SK-N-SH (cell line): ENCODE measurements at regions of chr10 and their contacts with region 1.

Region 1: DNA sequence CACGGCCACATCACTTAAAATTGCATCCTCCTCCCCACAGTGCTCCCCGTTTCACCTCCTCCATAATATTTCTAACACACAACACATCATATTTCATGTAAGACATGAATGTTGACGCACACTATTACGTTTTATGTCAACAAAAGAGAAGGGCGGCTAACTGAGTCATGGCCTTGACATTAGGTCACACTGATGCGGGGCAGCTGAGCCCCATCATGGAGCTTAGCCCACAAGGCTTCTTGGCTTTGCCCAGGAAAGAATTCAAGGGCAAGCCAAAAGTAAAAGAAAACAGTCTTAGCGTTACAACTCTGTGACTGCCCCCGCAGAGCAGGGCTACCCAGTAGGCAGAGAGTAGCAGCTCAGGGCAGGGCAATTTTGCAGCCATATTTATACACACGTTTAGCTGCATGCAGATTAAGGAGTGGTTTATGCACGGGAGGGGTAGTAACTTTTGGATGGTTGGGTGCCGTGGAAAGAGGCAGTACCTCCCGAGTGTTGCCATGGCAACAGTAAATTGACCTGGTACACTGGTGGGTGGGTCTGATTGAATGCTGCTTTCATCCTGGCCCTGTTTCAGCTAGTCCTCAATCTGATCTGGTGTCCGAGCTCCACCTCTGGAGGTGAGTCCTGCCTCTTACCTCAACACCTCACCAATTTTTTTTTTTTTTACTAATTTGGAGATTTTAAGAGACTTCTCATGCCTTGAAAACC is 156.2 kb upstream of the FRMD4A start:
- DNase-seq: no peak
- H3K4me3 ChIP-seq: no peak overlapping the region
- H3K27ac ChIP-seq: no peak overlapping the region
- H3K4me1 ChIP-seq: no peaks in the 10 kb centered on the region
- H3K27me3 ChIP-seq: no peaks in the 10 kb centered on the region
- CTCF ChIP-seq: no peak
- EP300 ChIP-seq: no peak
- RAD21 ChIP-seq: no peak

Region 2: DNA sequence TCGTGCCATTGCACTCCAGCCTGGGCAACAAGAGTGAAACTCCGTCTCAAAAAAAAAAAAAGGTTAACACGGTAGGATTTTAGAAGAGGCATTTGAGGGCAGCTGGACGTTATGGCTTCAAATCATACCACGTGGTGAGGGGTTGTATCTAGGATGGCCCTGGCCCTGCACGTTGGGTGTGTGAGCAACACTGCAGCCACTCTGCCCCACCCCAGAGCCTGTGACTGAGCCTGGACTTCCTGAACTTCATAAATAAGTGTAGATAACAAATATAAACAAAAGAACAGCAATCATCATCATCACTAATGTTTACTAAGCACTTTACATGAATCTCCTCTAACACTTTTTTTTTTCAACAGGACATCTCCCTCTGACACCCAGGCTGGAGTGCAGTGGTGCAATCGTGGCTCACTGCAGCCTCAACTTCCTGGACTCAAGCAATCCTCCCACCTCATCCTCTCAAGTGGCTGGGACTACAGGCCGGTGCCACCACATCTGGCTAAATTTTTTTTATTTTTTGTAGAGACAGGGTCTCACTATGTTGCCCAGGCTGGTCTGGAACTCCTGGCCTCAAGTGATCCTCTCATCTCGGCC is 13.3 kb after region 1 on chr10:
- CTCF ChIA-PET with region 1: interaction called, 28 read pairs
- POLR2A ChIA-PET with region 1: no interaction called
- DNase-seq: no peak
- H3K4me3 ChIP-seq: no peak overlapping the region
- H3K27ac ChIP-seq: no peak overlapping the region
- H3K4me1 ChIP-seq: no peaks in the 10 kb centered on the region
- H3K27me3 ChIP-seq: no peaks in the 10 kb centered on the region
- CTCF ChIP-seq: no peak
- EP300 ChIP-seq: no peak
- RAD21 ChIP-seq: no peak

Region 3: GRCh38 chr10:14530465-14530864 is 43.5 kb after region 1 on chr10:
- CTCF ChIA-PET with region 1: no interaction called
- POLR2A ChIA-PET with region 1: no interaction called
- DNase-seq: no peak
- H3K4me3 ChIP-seq: no peak overlapping the region
- H3K27ac ChIP-seq: no peak overlapping the region
- H3K4me1 ChIP-seq: no peaks in the 10 kb centered on the region; a peak in 1 of 4 replicates
- H3K27me3 ChIP-seq: no peaks in the 10 kb centered on the region
- CTCF ChIP-seq: no peak
- EP300 ChIP-seq: no peak
- RAD21 ChIP-seq: no peak

Region 4: DNA sequence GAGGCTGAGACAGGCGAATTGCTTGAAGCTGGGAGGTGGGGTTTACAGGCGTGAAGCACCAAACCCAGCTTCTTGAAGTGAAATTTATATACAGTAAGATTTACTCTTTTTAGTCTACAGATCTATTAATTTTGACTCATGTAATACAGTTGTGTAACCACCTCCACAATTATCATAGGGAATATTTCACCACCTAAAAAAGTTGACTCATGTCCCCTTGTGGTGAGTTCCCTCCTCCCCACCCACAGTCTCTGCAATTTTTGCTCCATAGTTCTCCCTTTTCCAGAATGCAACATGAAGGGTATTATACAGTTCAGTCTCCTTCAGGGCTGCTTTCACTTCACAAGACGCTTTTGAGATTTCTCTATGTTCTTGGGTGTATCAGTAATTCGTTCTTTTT is 130.9 kb after region 1 on chr10:
- CTCF ChIA-PET with region 1: no interaction called
- POLR2A ChIA-PET with region 1: no interaction called
- DNase-seq: no peak
- H3K4me3 ChIP-seq: no peak overlapping the region
- H3K27ac ChIP-seq: no peak overlapping the region
- H3K4me1 ChIP-seq: peaks cover 0 to 4% of the 10 kb centered on the region in 2 experiments; a peak in 1 of 4 replicates
- H3K27me3 ChIP-seq: no peaks in the 10 kb centered on the region
- CTCF ChIP-seq: no peak
- EP300 ChIP-seq: no peak
- RAD21 ChIP-seq: no peak

Region 5: DNA sequence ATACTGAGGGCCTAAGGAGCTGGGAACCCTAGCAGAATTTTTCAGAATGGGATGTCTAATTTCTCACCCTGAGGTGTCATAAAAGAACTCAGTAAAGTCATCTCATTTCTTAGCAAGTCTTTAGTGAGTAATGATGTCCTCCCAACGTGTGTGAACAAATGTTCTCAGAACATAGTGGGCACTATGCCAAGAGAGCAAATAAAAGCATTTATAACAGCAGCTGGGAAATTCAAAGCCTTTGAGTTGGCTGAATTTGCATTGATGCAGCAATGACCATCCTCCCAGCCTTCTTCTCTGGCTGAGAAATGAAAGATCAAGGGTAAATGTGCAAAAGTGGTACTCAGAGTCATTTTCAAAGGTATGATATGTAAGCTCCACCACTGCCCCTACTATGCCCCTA is 178.4 kb after region 1 on chr10:
- CTCF ChIA-PET with region 1: no interaction called
- POLR2A ChIA-PET with region 1: no interaction called
- DNase-seq: no peak
- H3K4me3 ChIP-seq: no peak overlapping the region
- H3K27ac ChIP-seq: no peak overlapping the region
- H3K4me1 ChIP-seq: peaks cover 0 to 16% of the 10 kb centered on the region in 2 experiments; a peak in 2 of 4 replicates
- H3K27me3 ChIP-seq: no peaks in the 10 kb centered on the region
- CTCF ChIP-seq: no peak
- EP300 ChIP-seq: no peak
- RAD21 ChIP-seq: no peak